Activated T-helper 1 cell treated with anti-CD3 and anti-CD28 coated beads, Interleukin-12 subunit alpha, Interleukin-12 subunit beta, Interleukin-2, Interleukin-4 antibody, amounts not matched to agents 30 ng/mL and 10 ng/mL and 1 ng/mL, durations not matched to agents 14 hours and 24 hours and 36 hours (primary cell): ENCODE measurements at regions of chr10 and their contacts with region 1.

Region 1: DNA sequence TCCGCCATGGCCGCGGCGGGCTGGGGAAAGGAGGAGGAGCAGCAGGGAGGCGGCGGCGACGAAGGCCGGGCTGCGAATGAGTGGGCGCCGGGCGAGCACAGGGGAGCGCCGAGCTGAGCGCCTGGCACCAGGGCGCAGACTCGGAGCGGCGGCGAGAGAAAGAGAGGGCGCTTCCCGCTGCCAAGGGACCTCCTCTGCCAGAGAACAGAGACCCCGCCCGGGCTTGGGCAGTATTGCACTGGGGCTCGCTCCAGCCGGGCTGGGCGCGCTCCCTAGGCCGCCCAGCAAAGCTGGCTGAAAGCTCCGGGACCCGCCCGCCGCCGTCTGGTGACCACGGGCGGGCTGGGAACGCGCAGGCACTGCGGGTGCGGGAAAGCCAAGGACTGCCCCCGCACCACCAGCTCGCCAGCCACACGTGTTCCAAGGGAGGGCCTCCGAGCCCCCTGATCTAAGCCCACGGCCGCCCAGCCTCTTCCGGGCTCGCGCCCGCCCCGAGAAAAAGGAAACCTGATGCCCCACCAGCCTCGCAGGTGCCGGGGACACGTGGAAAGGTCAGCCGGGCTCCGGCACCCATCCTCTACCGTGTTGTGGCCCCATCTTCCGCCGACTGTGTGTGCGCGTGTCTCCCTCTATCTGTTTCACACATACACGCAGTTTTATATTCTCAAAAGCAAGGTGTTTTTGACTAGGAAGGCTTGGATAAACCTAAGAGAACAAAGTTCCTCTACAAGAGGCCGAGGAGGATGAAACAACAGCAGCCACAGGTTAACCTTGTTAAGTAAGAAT is at the start of gene CCDC6:
- DNase-seq: peak; percentile 86
- H3K4me3 Mint-ChIP-seq: peak within 1 kb of the TSS; percentile 98
- H3K27ac Mint-ChIP-seq: peak within 1 kb of the TSS; percentile 99
- H3K4me1 Mint-ChIP-seq: peaks cover 55% of the 10 kb centered on the region
- H3K27me3 Mint-ChIP-seq: peaks cover 2% of the 10 kb centered on the region
- total RNA-seq, gene CCDC6: 97.6 and 103 TPM in 2 replicates

Region 2: DNA sequence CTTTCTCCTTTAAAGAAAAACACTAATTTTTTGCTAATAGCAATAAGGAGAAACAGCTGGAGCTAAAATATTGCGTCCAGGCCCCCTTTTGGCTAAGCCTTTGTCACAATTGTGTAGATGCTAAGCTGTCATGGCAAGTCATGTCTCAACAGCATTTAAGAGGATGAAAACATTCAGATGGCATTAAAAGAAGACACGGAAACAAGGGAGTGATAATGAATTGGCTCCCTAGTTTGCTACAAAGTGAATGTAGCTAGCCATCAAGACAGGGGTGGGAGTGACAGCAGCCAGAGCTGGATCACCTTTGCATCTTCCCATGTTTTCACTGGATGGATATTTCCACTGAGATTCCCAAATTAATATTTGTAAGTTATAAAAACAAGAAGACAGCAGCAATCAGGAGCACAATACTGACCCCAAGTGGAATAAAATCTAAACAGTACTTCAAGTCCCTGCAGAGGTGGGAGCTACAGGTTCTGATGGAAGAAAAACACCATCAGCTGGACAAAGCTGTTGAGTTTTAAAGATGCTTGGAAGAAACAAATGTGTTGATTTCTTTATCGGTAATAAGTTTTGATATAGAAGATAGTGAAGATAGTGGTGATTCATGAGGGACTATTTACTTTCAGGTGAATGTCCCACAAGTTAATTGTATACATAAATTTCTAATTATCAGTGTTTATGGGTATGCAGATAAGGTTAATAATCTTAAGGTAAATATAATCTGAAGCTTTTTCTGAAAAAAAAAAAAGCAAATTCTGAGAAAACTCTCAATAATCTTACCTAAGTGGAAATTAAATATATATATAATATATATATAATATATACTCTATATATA is 326.4 kb before region 1 on chr10:
- intact Hi-C with region 1: no loop called
- DNase-seq: no peak
- H3K4me3 Mint-ChIP-seq: no peak overlapping the region
- H3K27ac Mint-ChIP-seq: no peak overlapping the region
- H3K4me1 Mint-ChIP-seq: no peaks in the 10 kb centered on the region
- H3K27me3 Mint-ChIP-seq: no peaks in the 10 kb centered on the region

Region 3: GRCh38 chr10:59625721-59626522 is 280.7 kb before region 1 on chr10:
- intact Hi-C with region 1: loop called (anchors 1 kb)
- DNase-seq: peak; percentile 36
- H3K4me3 Mint-ChIP-seq: no peak overlapping the region
- H3K27ac Mint-ChIP-seq: no peak overlapping the region
- H3K4me1 Mint-ChIP-seq: peaks cover 6% of the 10 kb centered on the region
- H3K27me3 Mint-ChIP-seq: peaks cover 18% of the 10 kb centered on the region

Region 4: GRCh38 chr10:59830601-59831259 is 75.9 kb before region 1 on chr10:
- intact Hi-C with region 1: loop called (anchors 1 kb)
- DNase-seq: no peak
- H3K4me3 Mint-ChIP-seq: no peak overlapping the region
- H3K27ac Mint-ChIP-seq: no peak overlapping the region
- H3K4me1 Mint-ChIP-seq: peaks cover 72% of the 10 kb centered on the region
- H3K27me3 Mint-ChIP-seq: no peaks in the 10 kb centered on the region

Region 5: DNA sequence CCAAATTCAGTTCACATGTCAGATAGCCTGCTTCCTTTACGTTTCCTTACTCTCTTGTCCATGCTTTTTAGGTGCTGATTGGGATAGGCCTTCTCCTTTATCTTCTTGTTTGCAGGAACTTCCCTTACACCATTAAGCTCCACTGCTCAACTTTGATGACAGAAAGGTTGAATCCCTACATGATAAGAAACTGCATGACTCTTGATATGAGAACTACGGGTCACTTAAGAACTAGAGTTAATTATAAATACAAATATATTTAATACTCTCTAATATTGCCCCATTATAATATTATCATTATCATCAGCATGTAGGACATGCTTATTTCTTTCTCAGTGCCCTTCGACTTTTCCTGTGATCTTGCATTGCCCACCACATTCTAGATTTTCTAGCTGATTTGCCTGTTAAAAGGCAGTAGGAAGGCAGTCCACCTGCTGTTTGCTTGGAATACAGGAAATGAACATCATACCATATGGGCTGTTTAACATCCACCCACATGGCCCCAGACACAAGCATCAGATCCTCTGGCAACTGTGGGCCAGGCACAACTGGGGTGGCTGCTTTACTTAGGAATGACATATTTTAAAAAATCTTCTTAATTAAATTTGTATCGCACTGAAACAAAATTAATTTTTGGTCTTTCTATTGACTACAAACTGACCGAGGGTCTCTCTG is 59.5 kb after region 1 on chr10:
- intact Hi-C with region 1: no loop called
- DNase-seq: no peak
- H3K4me3 Mint-ChIP-seq: no peak overlapping the region
- H3K27ac Mint-ChIP-seq: no peak overlapping the region
- H3K4me1 Mint-ChIP-seq: no peaks in the 10 kb centered on the region
- H3K27me3 Mint-ChIP-seq: peaks cover 5% of the 10 kb centered on the region

Region 6: DNA sequence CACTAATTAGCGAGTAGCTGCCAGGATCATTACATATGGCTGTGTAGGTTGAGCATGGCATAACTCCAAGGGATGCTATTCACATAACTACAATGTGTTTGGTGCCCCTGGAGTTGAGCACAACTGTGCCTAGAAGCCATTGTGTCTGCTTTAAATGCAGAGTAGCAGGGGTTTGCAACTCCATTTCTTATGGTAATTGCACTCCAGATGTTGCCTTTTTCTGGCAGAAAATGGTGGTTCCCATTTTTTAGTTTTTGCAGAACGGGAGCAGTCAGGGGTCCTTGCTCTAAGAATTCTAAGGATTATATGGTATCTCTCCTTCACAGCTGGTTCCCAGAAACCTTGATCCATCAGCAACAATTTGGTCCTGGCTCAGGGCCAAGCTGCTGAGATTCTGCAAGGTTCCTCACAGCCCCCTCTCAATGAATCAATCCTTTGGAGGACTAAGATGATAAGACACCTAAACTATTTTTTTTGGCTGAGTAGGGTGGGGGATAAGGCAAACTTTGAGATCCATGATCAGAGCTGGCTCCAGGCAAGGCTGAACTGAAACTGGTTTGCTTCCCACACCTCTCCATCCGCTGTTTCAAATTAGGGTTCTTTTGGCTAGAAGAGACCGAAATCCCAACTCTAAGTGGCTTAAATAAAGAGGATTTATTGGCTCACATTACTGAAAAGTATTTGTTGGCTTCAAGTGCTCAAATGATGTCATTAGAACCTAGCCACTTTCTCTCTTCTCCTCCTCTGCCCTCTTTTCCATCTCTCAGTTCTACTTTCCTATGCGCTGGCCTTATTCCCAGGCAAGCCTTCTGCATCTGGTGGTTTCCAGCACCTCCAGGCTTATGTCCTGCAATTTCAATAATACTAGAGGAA is 97.3 kb after region 1 on chr10:
- intact Hi-C with region 1: loop called (anchors 5 kb)
- DNase-seq: no peak
- H3K4me3 Mint-ChIP-seq: no peak overlapping the region
- H3K27ac Mint-ChIP-seq: no peak overlapping the region
- H3K4me1 Mint-ChIP-seq: peaks cover 16% of the 10 kb centered on the region
- H3K27me3 Mint-ChIP-seq: no peaks in the 10 kb centered on the region

Region 7: DNA sequence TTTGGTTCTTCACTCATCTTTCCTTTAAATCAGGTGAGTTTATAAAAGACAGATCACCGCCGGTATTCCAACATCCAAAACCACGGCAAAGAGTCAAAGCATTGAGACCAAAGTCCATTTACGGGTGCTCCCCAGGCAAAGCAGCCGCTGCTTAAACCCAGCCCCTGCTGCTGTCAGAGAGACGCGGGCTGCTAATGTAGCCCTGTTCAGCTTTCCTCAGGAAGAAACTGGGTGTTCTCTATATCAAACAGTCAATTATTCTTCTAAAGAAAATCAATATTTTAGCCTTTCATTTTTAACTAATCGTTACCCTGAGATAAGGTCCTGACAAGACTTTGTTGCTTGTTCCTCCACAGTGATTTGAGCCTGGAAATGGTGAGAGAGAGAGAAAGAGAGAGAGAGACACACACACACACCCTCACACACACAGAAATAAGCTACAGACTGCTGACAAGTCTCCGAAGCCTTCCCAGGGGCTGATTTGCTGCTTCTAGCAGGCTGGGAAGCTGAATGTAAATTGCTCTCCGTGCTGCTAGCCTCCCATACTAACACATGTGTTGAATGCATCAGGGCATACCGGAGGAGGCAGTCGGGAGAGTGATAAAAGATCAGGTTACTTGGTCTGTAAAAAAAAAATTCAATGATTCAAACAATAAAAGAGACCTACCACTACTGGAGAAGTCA is 666.0 kb after region 1 on chr10:
- intact Hi-C with region 1: loop called (anchors 5 kb)
- DNase-seq: peak; percentile 21
- H3K4me3 Mint-ChIP-seq: peak overlapping the region; percentile 92
- H3K27ac Mint-ChIP-seq: peak overlapping the region; percentile 87
- H3K4me1 Mint-ChIP-seq: peaks cover 68% of the 10 kb centered on the region
- H3K27me3 Mint-ChIP-seq: no peaks in the 10 kb centered on the region

Region 8: GRCh38 chr10:60964257-60965235 is 1057.9 kb after region 1 on chr10:
- intact Hi-C with region 1: no loop called
- DNase-seq: peak; percentile 23
- H3K4me3 Mint-ChIP-seq: no peak overlapping the region
- H3K27ac Mint-ChIP-seq: no peak overlapping the region
- H3K4me1 Mint-ChIP-seq: peaks cover 34% of the 10 kb centered on the region
- H3K27me3 Mint-ChIP-seq: peaks cover 18% of the 10 kb centered on the region

Region 9: GRCh38 chr10:61903221-61903927 is 1996.8 kb after region 1 on chr10:
- intact Hi-C with region 1: loop called (anchors 10 kb)
- DNase-seq: peak; percentile 69
- H3K4me3 Mint-ChIP-seq: peak overlapping the region; percentile 97
- H3K27ac Mint-ChIP-seq: peak overlapping the region; percentile 95
- H3K4me1 Mint-ChIP-seq: peaks cover 60% of the 10 kb centered on the region
- H3K27me3 Mint-ChIP-seq: no peaks in the 10 kb centered on the region